HAP-1 (cell line): ENCODE measurements at regions of chr11 and their contacts with region 1.

Region 1: GRCh38 chr11:121321614-121322243 is 29.2 kb downstream of the SC5D start:
- DNase-seq: no peak
- H3K4me3 ChIP-seq: no peak overlapping the region
- H3K4me1 ChIP-seq: no peaks in the 10 kb centered on the region
- H3K27me3 ChIP-seq: 0 out of 2 replicates have a peak, but pooled peaks cover 3% of the 10 kb centered on the region

Region 2: DNA sequence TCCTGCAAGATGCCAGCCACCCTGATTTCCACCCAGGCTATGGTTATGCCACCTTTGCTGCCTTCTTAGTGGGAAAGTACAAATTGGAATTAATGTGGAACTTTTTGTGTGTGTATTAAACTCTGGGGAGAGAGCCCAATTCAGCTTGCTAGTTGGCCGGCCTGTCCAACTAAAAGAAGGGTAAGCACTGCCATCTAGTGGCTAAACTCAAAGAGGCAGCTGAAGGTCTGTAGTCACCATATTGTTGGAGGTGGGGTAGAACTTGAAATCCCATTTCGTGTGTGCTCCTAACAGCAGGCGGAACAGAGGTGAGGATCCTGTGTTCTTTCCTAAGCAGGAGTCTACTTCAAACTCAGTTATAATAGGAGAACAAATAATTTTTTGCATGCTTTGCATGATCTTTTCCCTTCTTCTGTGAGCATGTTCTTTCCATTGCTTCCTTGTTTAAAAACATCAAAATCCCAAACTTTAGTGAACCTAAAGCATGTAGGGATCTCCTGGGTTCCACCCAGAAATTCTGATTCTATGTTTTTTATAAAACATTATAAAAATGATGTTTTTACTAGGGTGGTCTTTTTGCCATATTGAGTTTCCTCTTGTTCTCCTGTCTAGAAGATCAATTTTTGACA is 269.8 kb after region 1 on chr11:
- in situ Hi-C with region 1: loop called (anchors 5 kb)
- DNase-seq: peak; percentile 65 to 83
- H3K4me3 ChIP-seq: no peak overlapping the region
- H3K4me1 ChIP-seq: no peaks in the 10 kb centered on the region
- H3K27me3 ChIP-seq: no peaks in the 10 kb centered on the region